ENCODE measurements at regions of chr3 and their contacts with region 1.

Region 1: DNA sequence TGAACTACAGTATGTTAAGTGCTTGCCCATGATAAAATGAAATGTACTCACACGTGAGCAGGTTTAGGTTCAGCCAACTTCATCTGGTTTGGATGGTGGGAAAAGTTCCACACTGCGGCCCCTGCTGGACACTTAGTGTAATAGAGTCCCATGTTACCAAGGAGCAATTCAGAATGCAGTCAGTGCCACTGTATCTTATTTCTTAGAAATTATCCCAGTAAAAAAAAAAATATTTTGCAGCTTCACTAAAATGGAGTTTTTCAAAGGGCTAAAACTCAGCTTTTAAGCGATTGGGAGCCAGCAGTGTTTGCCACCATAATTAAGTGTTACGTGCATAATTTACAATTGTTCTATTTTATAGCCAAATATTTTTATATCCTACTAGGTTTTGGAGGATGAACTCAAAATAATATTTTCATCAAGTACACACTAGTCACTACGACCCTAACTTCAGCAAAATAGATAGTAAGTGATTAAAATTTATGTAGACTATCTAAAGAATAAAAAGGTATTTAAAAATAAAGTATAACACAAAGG is 371.7 kb upstream of the GBE1 start:
- DNase-seq: no peak
- H3K4me3 ChIP-seq: no peak overlapping the region
- H3K27ac ChIP-seq: no peak overlapping the region
- H3K4me1 ChIP-seq: no peaks in the 10 kb centered on the region
- H3K27me3 ChIP-seq: no peaks in the 10 kb centered on the region
- CTCF ChIP-seq: peak; percentile 75 to 83 (median 81)
- EP300 ChIP-seq: no peak
- POLR2A ChIP-seq: no peak

Region 2: GRCh38 chr3:81490541-81491288 is 642.4 kb before region 1 on chr3:
- intact Hi-C with region 1: loop called (anchors 10 kb)
- DNase-seq: peak; percentile 95
- H3K4me3 ChIP-seq: no peak overlapping the region
- H3K27ac ChIP-seq: no peak overlapping the region
- H3K4me1 ChIP-seq: peaks cover 4 to 19% (median 10%) of the 10 kb centered on the region in 4 donors
- H3K27me3 ChIP-seq: no peaks in the 10 kb centered on the region
- CTCF ChIP-seq: peak; percentile 57 to 71 (median 68)
- EP300 ChIP-seq: no peak
- POLR2A ChIP-seq: no peak

Region 3: GRCh38 chr3:81666493-81667121 is 466.5 kb before region 1 on chr3:
- intact Hi-C with region 1: loop called (anchors 5 kb)
- DNase-seq: no peak
- H3K4me3 ChIP-seq: no peak overlapping the region
- H3K27ac ChIP-seq: no peak overlapping the region
- H3K4me1 ChIP-seq: peaks cover 0 to 7% (median 0%) of the 10 kb centered on the region in 4 donors
- H3K27me3 ChIP-seq: no peaks in the 10 kb centered on the region
- CTCF ChIP-seq: peak; percentile 57 to 76 (median 65)
- EP300 ChIP-seq: no peak
- POLR2A ChIP-seq: no peak

Region 4: DNA sequence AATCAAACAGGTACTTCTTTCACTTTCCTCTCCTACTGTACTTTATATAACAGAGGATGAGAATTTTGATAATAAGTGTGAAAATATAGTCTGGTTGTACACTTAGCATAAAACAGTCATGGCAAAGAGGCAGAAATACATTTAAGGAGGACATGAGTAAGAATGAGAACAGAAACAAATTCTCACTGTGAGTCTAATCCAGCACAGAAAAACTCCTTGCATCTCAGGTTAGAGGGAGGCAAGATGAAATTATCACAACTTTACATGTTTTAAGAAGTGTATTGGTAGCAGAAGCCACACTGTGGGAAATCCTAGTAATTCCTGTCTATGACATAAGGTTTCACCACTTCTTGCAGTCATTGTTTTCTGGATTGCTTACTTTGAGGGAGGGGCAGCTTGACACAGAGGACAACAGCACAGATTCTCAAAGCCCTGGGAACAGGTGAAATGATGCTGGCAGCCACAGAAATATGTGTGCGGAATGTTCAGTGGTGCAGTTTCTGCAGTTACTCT is 361.9 kb after region 1 on chr3:
- intact Hi-C with region 1: no loop called
- DNase-seq: no peak
- H3K4me3 ChIP-seq: no peak overlapping the region
- H3K27ac ChIP-seq: no peak overlapping the region
- H3K4me1 ChIP-seq: no peaks in the 10 kb centered on the region
- H3K27me3 ChIP-seq: no peaks in the 10 kb centered on the region
- CTCF ChIP-seq: no peak
- EP300 ChIP-seq: no peak
- POLR2A ChIP-seq: no peak

Measured in esophagus muscularis mucosa (tissue), 4 donors.